MCF 10A (cell line): ENCODE measurements at regions of chr7 and their contacts with region 1.

Region 1: DNA sequence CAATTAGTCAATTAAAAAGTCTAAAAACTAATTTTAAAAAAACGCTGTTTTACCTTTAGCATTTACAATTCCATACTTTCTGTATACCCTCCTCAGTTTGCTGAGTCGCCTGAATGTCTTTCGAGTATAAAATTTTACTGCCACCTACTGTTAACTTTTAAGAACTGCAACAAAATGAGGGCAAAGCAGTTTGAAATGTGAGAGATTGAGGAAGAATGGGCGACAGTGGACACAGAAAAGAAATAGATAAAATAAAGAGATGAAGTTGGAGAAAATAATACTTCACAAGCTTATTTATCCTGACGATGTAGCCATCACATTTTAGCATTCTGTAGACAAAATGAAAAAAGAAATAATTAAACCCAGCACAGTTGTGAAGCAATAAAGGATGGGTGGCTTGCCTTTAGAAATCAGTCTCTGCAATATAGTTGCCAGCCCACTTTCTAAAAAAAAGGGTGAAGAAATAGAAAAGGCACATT is 110.8 kb upstream of the PTN start:
- DNase-seq: peak; percentile 57
- H3K4me3 Mint-ChIP-seq: no peak overlapping the region
- H3K27ac Mint-ChIP-seq: no peak overlapping the region
- H3K4me1 Mint-ChIP-seq: no peaks in the 10 kb centered on the region
- H3K27me3 Mint-ChIP-seq: peaks cover 64% of the 10 kb centered on the region
- CTCF ChIP-seq: peak; percentile 48

Region 2: DNA sequence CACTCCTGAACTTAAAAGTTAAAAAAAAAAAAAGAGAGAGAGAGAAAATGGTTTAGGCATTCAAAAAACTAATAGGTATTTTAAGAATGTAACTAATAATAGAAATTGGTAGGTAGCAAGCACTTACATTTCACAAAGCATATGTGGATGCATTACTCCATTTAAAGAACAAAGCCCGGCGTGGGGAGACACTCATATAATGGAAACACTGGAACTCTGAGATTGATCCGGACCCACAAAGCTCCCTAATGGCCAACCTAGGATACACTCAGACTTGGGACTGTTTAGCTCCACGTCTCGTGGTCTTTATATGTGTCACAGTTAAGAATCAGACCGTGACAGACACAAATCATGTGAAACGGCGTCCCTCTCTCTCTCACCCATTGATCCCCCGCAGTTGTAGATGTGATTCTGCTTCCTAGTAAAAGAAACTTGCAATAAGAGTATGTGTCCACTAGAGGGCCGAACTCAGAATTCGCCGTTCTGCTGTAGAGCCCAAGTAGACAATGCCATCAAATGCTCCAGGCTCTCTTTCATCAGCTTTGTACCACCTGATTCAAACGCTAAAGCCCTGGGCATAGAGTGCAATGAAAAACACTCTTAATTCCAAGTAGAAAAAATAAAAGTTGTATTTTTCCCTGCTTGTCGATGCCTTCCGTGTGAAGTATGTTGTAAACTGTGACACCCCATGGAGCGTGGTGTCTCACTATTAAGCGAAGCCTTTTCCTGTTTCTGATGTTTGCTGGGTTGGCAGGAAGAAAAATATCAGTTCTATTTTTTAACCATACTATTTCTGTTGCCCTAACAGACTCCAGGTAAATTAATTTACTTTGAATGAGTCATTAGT is 1048.1 kb before region 1 on chr7:
- CTCF ChIA-PET with region 1: interaction called, 5 read pairs
- POLR2A ChIA-PET with region 1: interaction called, 4 read pairs
- intact Hi-C with region 1: loop called (anchors 1 kb)
- DNase-seq: peak; percentile 61
- H3K4me3 Mint-ChIP-seq: no peak overlapping the region
- H3K27ac Mint-ChIP-seq: no peak overlapping the region
- H3K4me1 Mint-ChIP-seq: no peaks in the 10 kb centered on the region
- H3K27me3 Mint-ChIP-seq: peaks cover 62% of the 10 kb centered on the region
- CTCF ChIP-seq: peak; percentile 72

Region 3: DNA sequence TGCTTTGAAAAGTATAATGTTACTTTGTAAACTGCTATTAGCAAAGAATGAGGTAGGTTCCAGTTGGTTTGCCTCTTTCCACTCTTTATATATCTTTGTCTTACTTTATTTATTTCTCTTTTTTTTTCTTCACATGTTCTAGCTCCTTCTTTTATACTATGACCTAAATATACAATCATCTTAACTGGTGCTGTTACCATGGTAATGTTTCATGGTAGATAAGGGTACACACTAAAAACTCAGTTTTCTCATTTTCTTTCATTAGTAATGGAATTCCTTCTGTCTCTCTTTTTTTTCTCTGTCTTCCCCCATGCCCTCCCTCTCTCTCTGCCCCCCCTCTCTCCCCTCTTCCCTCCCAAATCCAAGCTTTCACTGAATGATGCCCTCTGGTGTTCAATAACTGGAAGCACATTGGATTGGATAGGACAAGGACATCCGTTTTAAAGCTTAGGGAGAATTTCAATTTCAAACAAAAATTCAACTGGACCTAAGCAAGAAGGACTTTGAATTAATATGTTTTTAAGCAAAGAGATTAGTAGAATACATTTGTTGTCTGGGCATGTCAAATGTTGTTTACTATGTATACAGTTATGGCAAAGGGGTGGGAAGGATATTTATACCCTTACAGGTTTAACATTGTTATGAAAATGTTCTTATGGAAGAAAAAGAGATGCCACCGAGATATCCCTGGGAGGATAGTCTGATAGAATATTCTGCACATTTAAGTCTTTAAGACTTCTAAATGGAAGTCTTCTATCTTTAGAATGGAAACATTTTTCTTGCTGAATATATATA is 579.9 kb before region 1 on chr7:
- CTCF ChIA-PET with region 1: interaction called, 3 read pairs
- POLR2A ChIA-PET with region 1: no interaction called
- intact Hi-C with region 1: loop called (anchors 10 kb)
- DNase-seq: peak; percentile 34
- H3K4me3 Mint-ChIP-seq: no peak overlapping the region
- H3K27ac Mint-ChIP-seq: no peak overlapping the region
- H3K4me1 Mint-ChIP-seq: no peaks in the 10 kb centered on the region
- H3K27me3 Mint-ChIP-seq: peaks cover 23% of the 10 kb centered on the region
- CTCF ChIP-seq: peak; percentile 30

Region 4: DNA sequence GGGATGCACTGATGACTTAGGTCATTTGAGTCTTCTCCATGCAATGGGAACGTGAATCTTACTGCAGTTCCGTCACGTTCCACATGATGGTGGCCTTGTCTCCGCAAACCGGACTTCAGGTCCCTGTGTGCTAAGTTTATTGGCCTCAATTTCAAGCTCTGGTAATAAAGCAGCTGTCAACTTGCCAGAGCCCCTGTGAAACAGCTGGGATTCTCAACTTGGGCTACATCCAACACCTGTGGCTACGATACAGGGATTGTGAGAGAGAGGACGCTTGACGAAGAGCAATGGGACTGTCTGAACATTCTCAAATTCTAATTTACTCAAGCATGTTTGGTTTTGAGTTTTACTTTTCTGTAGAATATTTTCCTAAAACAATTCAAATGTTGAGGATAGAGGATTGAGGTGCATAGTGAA is 285.0 kb before region 1 on chr7:
- CTCF ChIA-PET with region 1: interaction called, 7 read pairs
- POLR2A ChIA-PET with region 1: no interaction called
- intact Hi-C with region 1: loop called (anchors 1 kb)
- DNase-seq: peak; percentile 57
- H3K4me3 Mint-ChIP-seq: no peak overlapping the region
- H3K27ac Mint-ChIP-seq: no peak overlapping the region
- H3K4me1 Mint-ChIP-seq: no peaks in the 10 kb centered on the region
- H3K27me3 Mint-ChIP-seq: peaks cover 11% of the 10 kb centered on the region
- CTCF ChIP-seq: peak; percentile 50

Region 5: GRCh38 chr7:137423321-137423720 is 31.0 kb before region 1 on chr7:
- CTCF ChIA-PET with region 1: no interaction called
- POLR2A ChIA-PET with region 1: no interaction called
- intact Hi-C with region 1: no loop called
- DNase-seq: no peak
- H3K4me3 Mint-ChIP-seq: no peak overlapping the region
- H3K27ac Mint-ChIP-seq: no peak overlapping the region
- H3K4me1 Mint-ChIP-seq: no peaks in the 10 kb centered on the region
- H3K27me3 Mint-ChIP-seq: no peaks in the 10 kb centered on the region
- CTCF ChIP-seq: no peak

Region 6: GRCh38 chr7:137443616-137444015 is 10.7 kb before region 1 on chr7:
- CTCF ChIA-PET with region 1: interaction called, 17 read pairs
- POLR2A ChIA-PET with region 1: no interaction called
- intact Hi-C with region 1: no loop called
- DNase-seq: peak; percentile 41
- H3K4me3 Mint-ChIP-seq: no peak overlapping the region
- H3K27ac Mint-ChIP-seq: no peak overlapping the region
- H3K4me1 Mint-ChIP-seq: no peaks in the 10 kb centered on the region
- H3K27me3 Mint-ChIP-seq: peaks cover 51% of the 10 kb centered on the region
- CTCF ChIP-seq: no peak

Region 7: DNA sequence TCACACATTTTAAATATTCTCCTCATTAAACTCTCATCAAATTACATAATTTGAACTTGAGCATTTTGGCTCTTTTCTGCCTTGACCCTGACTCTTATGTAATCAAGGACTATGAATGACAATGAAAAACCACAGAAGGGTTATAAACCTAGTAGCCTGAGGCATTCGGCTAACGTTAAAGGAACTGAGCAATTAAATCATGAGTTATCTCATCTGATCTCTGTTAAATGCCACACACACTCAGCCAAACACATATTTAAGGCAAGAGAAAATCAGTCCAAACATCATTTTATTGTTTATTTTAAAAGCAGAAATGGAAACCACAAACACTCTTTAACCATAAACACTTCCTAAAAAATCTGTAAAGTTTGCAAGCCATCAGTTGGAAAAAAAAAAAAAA is 188.2 kb after region 1 on chr7:
- CTCF ChIA-PET with region 1: no interaction called
- POLR2A ChIA-PET with region 1: no interaction called
- intact Hi-C with region 1: no loop called
- DNase-seq: peak; percentile 71
- H3K4me3 Mint-ChIP-seq: no peak overlapping the region
- H3K27ac Mint-ChIP-seq: no peak overlapping the region
- H3K4me1 Mint-ChIP-seq: peaks cover 5% of the 10 kb centered on the region
- H3K27me3 Mint-ChIP-seq: peaks cover 12% of the 10 kb centered on the region
- CTCF ChIP-seq: no peak